ENCODE measurements at regions of chr19 and their contacts with region 1.

Region 1: DNA sequence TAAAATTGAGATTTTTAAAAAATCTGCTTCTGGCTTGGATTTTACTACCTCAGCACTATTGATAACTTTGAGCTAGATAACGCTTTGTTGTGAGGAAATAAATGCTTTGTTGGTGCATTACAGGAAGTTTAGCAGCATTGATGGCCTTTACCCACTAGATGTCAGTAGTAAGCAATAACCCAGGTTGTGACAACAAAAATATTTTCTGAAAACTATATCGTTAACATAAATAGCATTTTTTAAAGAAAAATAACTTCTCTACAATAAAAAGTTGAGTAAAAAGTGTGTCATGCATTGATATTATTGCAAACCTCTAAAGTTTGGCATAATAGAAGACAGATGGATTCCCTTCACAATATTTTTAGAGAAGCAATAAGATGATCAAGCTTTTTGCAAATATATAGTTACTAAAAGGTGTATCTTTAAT is 1246.5 kb downstream of the UQCRFS1 start:
- DNase-seq: peak; percentile 5
- H3K4me3 ChIP-seq: no peak overlapping the region
- H3K27ac ChIP-seq: no peak overlapping the region
- H3K4me1 ChIP-seq: no peaks in the 10 kb centered on the region; a peak in 1 of 4 replicates
- H3K27me3 ChIP-seq: no peaks in the 10 kb centered on the region
- CTCF ChIP-seq: peak; percentile 82
- EP300 ChIP-seq: no peak
- RAD21 ChIP-seq: peak; percentile 49

Region 2: DNA sequence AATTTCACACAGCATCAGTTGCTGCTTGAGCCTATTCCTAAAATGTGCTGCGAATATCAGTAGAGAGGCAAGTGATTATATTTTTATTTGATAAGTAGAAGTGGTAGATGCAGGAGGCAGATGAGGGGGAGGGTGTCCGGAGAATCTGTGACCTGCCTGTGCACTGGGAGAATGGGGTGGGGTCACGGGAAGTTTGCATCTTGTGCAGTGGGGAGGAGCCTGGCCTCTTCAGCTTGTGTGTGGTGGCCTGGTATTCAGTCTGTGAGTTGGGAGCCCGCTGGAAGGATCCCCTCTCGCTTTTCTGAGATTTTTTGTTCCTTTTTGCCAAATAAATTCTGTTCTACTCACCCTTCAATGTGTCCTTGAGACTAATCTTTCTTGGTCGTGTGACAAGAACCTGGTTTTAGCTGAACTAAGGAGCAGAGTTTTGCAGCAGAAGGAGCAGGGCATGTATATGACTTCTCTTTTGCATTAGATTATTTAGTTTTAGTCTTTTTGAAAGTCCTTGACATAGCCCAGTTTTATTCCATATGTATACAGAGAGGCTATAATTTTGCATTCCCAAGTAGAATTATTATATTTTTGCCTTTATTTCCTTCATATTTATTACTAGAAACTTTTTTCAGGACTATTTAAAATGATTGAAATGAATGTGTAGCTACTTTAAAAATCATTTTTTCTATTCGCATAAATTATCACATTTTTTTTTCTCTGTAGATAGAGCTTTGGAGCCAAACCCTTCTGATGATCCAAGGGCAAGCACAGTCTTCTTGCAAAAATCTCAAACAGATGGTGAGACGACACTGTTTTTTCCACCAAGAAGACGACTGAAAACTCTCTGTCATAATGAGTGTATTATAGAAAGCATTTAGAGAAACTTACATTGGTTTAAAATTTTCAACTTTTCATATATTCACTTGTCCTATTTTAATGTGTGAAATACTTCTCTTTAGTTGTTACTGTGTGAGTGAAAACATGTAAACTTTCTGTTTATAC is 10.6 kb before region 1 on chr19:
- CTCF ChIA-PET with region 1: interaction called, 21 read pairs
- POLR2A ChIA-PET with region 1: no interaction called
- DNase-seq: no peak
- H3K4me3 ChIP-seq: no peak overlapping the region
- H3K27ac ChIP-seq: no peak overlapping the region
- H3K4me1 ChIP-seq: no peaks in the 10 kb centered on the region
- H3K27me3 ChIP-seq: no peaks in the 10 kb centered on the region
- CTCF ChIP-seq: no peak
- EP300 ChIP-seq: no peak
- RAD21 ChIP-seq: no peak

Measured in SK-N-SH (cell line).